ENCODE measurements at regions of chr12 and their contacts with region 1.

Region 1: DNA sequence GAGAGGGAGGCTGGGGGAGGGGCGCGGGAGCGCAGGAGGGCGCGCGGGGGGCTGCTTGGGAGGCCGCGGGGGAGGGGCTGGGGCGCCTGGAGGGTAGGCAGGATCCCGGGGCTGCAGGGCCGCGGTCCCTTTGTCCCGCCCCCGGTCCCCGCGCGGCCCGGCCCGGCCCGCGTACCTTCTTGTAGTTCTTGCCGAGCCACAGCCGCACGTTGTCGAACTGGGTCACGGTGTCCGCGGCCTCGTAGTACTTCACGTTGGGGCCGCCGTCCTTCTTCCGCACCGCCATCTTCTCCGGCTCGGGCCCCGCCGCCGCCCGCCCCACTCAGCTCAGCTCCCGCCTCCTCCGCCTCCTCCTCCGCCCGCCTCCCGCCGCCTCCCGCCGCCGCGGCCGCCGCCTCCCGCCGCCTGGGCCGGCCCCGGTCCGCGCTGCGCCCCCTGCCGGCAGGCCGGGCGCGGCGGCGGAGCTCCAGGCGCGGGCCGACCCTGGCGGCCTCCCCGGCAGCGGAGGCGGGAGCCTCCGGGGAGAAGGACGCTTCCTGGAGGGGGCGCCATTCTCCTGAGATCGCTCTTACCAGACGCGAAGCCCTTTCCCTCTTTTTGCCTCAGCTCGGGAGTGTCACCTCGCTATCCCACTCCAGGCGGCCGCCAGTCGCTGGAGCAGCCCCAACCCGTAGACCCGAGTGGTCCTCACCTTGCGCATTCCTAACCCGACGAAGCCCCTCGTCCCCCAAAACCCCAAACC is at the start of gene SMARCC2:
- DNase-seq: peak; percentile 92 to 96 (median 95)
- ATAC-seq: peak; percentile 89 to 90
- H3K4me3 ChIP-seq: peak within 1 kb of the TSS; percentile 100
- H3K27ac ChIP-seq: peak within 1 kb of the TSS; percentile 97
- H3K4me1 ChIP-seq: peaks cover 9% of the 10 kb centered on the region
- H3K27me3 ChIP-seq: no peaks in the 10 kb centered on the region
- total RNA-seq, gene SMARCC2: 63.2 to 94.6 (median 72.2) TPM

Region 2: GRCh38 chr12:56117778-56118687 is 71.3 kb before region 1 on chr12 and contains the start of gene ZC3H10:
- intact Hi-C with region 1: loop called (anchors 2 to 10 kb)
- DNase-seq: peak; percentile 98 to 99 (median 98)
- ATAC-seq: peak; percentile 90
- H3K4me3 ChIP-seq: peak within 1 kb of the TSS; percentile 96
- H3K27ac ChIP-seq: peak within 1 kb of the TSS; percentile 99
- H3K4me1 ChIP-seq: peaks cover 6% of the 10 kb centered on the region
- H3K27me3 ChIP-seq: no peaks in the 10 kb centered on the region
- total RNA-seq, gene ZC3H10: 6.1 to 8.6 (median 6.7) TPM

Region 3: GRCh38 chr12:56127888-56128669 is 61.3 kb before region 1 on chr12 and contains the start of gene ESYT1:
- intact Hi-C with region 1: loop called in 2 of 4 experiments (anchors 5 to 10 kb)
- DNase-seq: peak; percentile 98 to 99 (median 99)
- ATAC-seq: peak; percentile 96 to 97
- H3K4me3 ChIP-seq: peak within 1 kb of the TSS; percentile 76
- H3K27ac ChIP-seq: peak within 1 kb of the TSS; percentile 85
- H3K4me1 ChIP-seq: no peaks in the 10 kb centered on the region
- H3K27me3 ChIP-seq: no peaks in the 10 kb centered on the region
- total RNA-seq, gene ESYT1: 30.7 to 38.5 (median 33.6) TPM

Region 4: GRCh38 chr12:56461235-56462159 is 272.1 kb after region 1 on chr12:
- intact Hi-C with region 1: loop called in 2 of 4 experiments (anchors 5 kb)
- DNase-seq: no peak
- ATAC-seq: no peak
- H3K4me3 ChIP-seq: no peak overlapping the region
- H3K27ac ChIP-seq: no peak overlapping the region
- H3K4me1 ChIP-seq: no peaks in the 10 kb centered on the region
- H3K27me3 ChIP-seq: no peaks in the 10 kb centered on the region

Region 5: GRCh38 chr12:56468216-56469006 is 279.1 kb after region 1 on chr12 and contains the start of gene SPRYD4:
- intact Hi-C with region 1: loop called in 2 of 4 experiments (anchors 5 kb)
- DNase-seq: peak; percentile 94 to 98 (median 97)
- ATAC-seq: peak; percentile 97 to 98
- H3K4me3 ChIP-seq: peak within 1 kb of the TSS; percentile 87
- H3K27ac ChIP-seq: peak within 1 kb of the TSS; percentile 55
- H3K4me1 ChIP-seq: peaks cover 6% of the 10 kb centered on the region
- H3K27me3 ChIP-seq: no peaks in the 10 kb centered on the region
- total RNA-seq, gene SPRYD4: 2.6 to 3.3 (median 2.7) TPM

Region 6: DNA sequence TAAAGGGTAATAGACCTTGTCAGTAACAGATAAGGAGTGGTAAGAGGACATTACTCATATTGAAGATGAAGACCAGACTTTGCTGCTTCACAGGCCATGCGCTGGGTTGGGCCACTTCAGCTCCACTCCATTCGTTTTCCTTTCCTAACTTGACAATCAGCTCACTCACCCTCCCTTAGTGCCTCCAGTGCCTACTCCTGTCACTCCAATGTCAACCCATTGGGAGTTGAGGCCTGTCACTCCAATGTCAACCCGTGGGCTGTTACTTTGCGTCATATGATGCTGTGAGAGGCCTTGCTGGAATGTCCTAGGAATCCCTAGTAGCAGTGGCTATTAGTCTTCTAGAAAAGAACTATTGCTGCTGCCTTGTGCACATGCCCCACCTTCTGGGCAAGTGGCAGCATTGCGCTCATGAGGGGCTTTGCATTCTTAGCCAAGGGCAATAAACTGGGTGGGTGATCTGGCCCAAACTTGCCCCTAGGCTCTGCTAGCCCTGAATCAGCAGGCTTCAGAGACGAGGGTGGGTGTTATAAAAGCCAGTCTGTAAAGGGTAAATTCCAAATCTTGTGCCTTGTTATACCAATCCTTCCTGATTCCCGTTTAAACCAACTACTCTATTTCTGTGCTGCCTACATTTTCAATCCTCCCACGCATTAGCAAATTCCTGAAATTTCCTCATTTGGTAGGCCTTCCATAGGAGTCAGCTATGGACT is 404.7 kb after region 1 on chr12:
- intact Hi-C with region 1: loop called in 1 of 4 experiments (anchors 10 kb)
- DNase-seq: peak; percentile 37 to 70 (median 65)
- ATAC-seq: peak; percentile 38 to 47
- H3K4me3 ChIP-seq: no peak overlapping the region
- H3K27ac ChIP-seq: peak overlapping the region; percentile 37
- H3K4me1 ChIP-seq: no peaks in the 10 kb centered on the region
- H3K27me3 ChIP-seq: no peaks in the 10 kb centered on the region